K562 (cell line): ENCODE measurements at regions of chr19 and their contacts with region 1.

Region 1: DNA sequence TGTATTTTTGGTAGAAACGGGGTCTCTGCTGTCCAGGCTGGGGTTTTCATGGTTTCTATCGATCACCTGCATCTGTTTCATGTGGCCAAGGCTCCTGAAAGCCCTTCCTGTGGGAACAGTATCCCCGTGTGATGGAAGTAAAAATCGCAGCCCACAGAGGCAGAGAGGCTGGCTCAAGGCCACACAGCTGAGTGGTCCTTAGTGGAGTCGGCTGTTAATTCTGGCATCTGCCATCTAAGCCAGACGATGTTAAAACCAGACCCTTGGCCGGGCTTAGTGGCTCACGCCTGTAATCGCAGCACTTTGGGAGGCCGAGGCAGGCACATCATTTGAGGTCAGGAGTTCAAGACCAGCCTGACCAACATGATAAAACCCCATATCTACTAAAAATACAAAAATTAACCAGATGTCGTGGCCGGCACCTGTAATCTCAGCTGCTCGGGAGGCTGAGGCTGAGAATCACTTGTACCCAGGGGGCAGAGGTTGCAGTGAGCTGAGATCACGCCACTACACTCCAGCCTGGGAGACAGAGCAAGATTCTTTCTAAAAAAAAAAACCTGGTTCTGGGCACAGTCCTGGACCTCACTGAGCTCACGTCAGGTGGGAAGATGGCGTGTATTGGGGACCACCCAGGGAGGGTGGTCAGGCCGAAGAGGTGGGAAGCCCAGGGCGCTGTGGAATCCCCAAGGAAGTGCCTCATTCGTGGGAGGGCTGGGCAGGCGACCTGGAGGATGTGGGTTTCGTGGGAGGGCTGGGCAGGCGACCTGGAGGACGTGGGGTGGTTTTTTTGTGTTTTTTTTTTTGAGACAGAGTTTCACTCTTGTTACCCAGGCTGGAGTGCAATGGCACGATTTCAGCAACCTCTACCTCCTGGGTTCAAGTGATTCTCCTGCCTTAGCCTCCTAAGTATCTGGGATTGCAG is 18.5 kb upstream of the MISP start:
- DNase-seq: no peak
- ATAC-seq: no peak
- H3K4me3 ChIP-seq: no peak overlapping the region
- H3K27ac ChIP-seq: no peak overlapping the region
- H3K4me1 ChIP-seq: peaks cover 0 to 64% of the 10 kb centered on the region in 2 experiments; a peak in 2 of 5 replicates
- H3K27me3 ChIP-seq: no peaks in the 10 kb centered on the region
- CTCF ChIP-seq: no peak
- EP300 ChIP-seq: no peak
- POLR2A ChIP-seq: no peak
- RAD21 ChIP-seq: no peak

Region 2: GRCh38 chr19:518603-519231 is 213.7 kb before region 1 on chr19:
- CTCF ChIA-PET with region 1: no interaction called
- POLR2A ChIA-PET with region 1: no interaction called
- in situ Hi-C with region 1: no loop called
- intact Hi-C with region 1: no loop called
- DNase-seq: no peak
- ATAC-seq: no peak
- H3K4me3 ChIP-seq: no peak overlapping the region
- H3K27ac ChIP-seq: no peak overlapping the region
- H3K4me1 ChIP-seq: peaks cover 8 to 60% of the 10 kb centered on the region in 2 experiments; a peak in 4 of 5 replicates
- H3K27me3 ChIP-seq: no peaks in the 10 kb centered on the region
- CTCF ChIP-seq: no peak
- EP300 ChIP-seq: no peak
- POLR2A ChIP-seq: no peak
- RAD21 ChIP-seq: no peak

Region 3: GRCh38 chr19:664913-665443 is 67.4 kb before region 1 on chr19:
- CTCF ChIA-PET with region 1: interaction called, 19 read pairs
- POLR2A ChIA-PET with region 1: interaction called, 5 read pairs
- in situ Hi-C with region 1: loop called (anchors 5 kb)
- intact Hi-C with region 1: loop called (anchors 1 kb)
- DNase-seq: peak; percentile 73 to 84 (median 79)
- ATAC-seq: peak; percentile 55
- H3K4me3 ChIP-seq: no peak overlapping the region
- H3K27ac ChIP-seq: no peak overlapping the region
- H3K4me1 ChIP-seq: peaks cover 26 to 43% of the 10 kb centered on the region in 2 experiments
- H3K27me3 ChIP-seq: no peaks in the 10 kb centered on the region
- CTCF ChIP-seq: peak; percentile 86 to 93 (median 89)
- EP300 ChIP-seq: no peak
- POLR2A ChIP-seq: no peak
- RAD21 ChIP-seq: peak; percentile 91 to 94